Endothelial cell of umbilical vein (primary cell): ENCODE measurements at regions of chr7 and their contacts with region 1.

Region 1: DNA sequence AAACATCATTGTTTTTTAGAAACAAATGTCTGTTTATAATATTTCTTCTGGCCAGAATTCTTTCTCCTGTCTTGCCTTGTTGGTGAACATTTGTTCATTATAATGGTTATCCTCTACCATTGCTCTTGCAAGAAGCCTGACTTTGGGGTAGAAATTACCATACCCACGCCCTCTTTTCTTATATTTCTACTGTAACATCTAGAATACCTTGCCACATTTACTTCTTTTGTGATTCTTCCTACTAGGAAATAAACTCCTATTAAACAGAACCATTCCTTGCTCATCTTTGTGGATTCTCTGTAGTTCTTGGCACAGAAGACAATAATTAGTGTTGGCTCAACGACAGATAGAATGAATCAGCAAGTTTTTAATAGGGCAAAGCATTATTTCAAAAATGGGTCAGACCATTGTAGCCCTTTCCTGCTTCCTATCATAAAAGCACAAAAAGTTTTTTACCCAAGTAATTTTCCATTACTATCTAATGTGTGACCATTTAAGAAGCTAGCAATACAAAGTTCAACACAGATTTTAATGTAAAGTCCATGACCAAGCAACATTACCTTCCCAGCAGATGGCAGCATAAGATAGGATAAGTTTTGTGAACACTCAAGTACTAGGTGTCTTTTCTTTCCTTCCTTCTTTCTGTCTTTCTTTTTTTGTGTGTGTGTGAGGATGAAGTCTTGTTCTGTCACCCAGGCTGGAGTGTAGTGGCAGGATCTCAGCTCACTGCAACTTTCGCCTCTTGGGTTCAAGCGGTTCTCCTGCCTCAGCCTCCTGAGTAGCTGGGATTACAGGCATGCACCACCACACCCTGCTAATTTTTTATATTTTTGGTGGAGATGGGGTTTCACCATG is 270.4 kb downstream of the HGF start:
- DNase-seq: peak; percentile 91
- H3K4me3 ChIP-seq: no peak overlapping the region
- H3K27ac ChIP-seq: no peak overlapping the region
- H3K4me1 ChIP-seq: peaks cover 14% of the 10 kb centered on the region
- H3K27me3 ChIP-seq: no peaks in the 10 kb centered on the region
- CTCF ChIP-seq: peak; percentile 36
- POLR2A ChIP-seq: no peak

Region 2: GRCh38 chr7:81515009-81515408 is 15.5 kb after region 1 on chr7:
- CTCF ChIA-PET with region 1: interaction called, 24 read pairs
- POLR2A ChIA-PET with region 1: no interaction called
- dilution Hi-C with region 1: no loop called
- intact Hi-C with region 1: no loop called
- DNase-seq: no peak
- H3K4me3 ChIP-seq: no peak overlapping the region
- H3K27ac ChIP-seq: no peak overlapping the region
- H3K4me1 ChIP-seq: peaks cover 12% of the 10 kb centered on the region
- H3K27me3 ChIP-seq: no peaks in the 10 kb centered on the region
- CTCF ChIP-seq: no peak
- POLR2A ChIP-seq: no peak

Region 3: DNA sequence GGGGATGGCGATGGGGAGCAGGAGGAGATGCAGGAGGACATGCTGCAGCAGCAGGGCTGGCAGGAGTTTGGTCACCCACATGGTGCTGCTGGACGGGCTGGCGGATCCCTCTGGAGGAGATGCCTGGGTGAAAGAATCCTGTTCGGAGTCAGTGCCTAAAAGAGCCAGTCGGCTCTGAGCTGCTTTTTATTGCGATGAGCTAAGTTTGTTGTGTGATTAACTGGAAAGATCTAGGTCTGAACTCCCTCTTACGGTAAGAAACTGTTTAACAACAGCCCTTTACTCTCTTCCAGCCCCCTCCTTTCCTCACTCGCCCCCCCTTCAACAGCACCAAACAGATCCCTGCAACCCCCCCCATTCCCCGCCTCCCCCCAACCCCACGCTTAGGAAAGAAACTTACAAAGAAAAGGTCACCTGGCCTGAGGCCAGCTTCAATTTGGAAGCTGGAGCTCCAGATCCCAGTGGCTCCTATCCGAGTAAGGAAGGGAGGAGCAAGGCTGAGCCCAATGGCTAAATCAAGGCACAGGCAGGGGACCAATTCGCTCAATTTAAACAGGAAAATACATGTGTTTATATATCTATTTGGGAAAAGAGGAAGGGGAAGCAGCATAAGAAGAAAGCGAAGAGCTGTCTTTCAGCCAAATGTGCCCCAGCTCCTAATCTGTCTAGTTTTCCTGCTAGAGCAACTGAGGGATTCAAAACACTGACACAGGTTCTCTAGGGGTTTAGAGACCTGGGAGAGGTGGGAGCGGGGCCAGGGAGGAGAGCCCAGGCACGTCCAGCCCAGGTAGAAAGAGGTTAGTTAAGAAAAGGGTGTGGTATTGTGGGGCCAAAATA is 270.6 kb after region 1 on chr7 and contains the start of gene HGF:
- CTCF ChIA-PET with region 1: interaction called, 22 read pairs
- POLR2A ChIA-PET with region 1: no interaction called
- dilution Hi-C with region 1: loop called (anchors 25 kb)
- intact Hi-C with region 1: loop called (anchors 5 kb)
- DNase-seq: peak; percentile 38
- H3K4me3 ChIP-seq: peak within 1 kb of the TSS in 1 of 3 experiments; percentile 27
- H3K27ac ChIP-seq: no peak within 1 kb of the TSS
- H3K4me1 ChIP-seq: peaks cover 3% of the 10 kb centered on the region
- H3K27me3 ChIP-seq: no peaks in the 10 kb centered on the region
- CTCF ChIP-seq: peak in 1 of 2 donors; percentile 8
- POLR2A ChIP-seq: no peak
- total RNA-seq, gene HGF: 0.15 and 0.35 TPM in 2 replicates

Region 4: DNA sequence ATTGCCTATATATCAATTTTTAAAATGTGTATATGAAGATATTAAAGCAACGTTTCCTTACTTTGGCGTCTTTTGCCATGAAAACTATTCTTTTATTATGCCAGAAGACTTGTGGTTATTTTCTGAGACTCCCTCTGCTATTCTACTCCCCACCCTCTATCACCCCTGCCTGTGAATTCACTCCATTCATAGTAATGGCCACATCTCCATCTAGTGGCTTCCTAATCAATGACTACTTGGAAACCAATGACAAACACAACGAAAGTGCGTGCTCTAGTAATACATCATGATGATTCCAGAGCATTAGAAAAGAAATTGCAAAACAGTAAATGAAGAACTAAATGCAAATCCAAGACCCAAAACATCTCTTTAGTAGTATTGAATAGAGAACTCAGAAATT is 457.0 kb after region 1 on chr7:
- CTCF ChIA-PET with region 1: interaction called, 69 read pairs
- POLR2A ChIA-PET with region 1: no interaction called
- dilution Hi-C with region 1: no loop called
- intact Hi-C with region 1: loop called (anchors 1 kb)
- DNase-seq: peak; percentile 52
- H3K4me3 ChIP-seq: no peak overlapping the region
- H3K27ac ChIP-seq: no peak overlapping the region
- H3K4me1 ChIP-seq: no peaks in the 10 kb centered on the region
- H3K27me3 ChIP-seq: no peaks in the 10 kb centered on the region
- CTCF ChIP-seq: peak; percentile 9 to 29
- POLR2A ChIP-seq: no peak

Region 5: DNA sequence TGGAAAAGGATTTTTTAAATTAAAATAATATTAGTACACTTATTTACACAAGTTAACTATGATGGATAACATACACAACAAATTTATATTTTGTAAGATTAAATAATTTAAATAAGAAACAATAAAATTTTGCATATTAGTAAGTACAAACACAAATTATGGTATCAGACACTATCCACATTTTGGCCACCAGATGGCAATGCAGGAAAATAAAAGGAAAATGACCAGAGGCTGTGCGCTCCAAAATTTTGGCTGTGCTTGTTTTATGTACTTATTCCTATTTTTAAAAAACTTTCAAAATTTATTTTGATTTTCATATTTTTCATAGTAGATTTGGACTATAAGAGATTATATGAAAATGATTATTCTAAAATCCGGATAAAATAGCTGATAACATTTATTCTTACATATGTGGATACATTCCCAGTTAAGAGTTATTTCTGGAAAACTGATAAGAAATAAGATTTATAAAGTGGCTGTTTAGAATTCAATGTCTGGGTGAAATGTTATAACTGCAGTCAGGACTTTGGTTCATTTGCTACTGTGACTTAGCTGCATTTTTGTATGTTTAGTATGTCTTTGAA is 545.1 kb after region 1 on chr7:
- CTCF ChIA-PET with region 1: interaction called, 12 read pairs
- POLR2A ChIA-PET with region 1: no interaction called
- dilution Hi-C with region 1: no loop called
- intact Hi-C with region 1: no loop called
- DNase-seq: peak; percentile 67
- H3K4me3 ChIP-seq: no peak overlapping the region
- H3K27ac ChIP-seq: no peak overlapping the region
- H3K4me1 ChIP-seq: peaks cover 27% of the 10 kb centered on the region
- H3K27me3 ChIP-seq: no peaks in the 10 kb centered on the region
- CTCF ChIP-seq: peak; percentile 36
- POLR2A ChIP-seq: no peak

Region 6: GRCh38 chr7:82572195-82572880 is 1072.8 kb after region 1 on chr7:
- CTCF ChIA-PET with region 1: interaction called, 23 read pairs
- POLR2A ChIA-PET with region 1: no interaction called
- dilution Hi-C with region 1: no loop called
- intact Hi-C with region 1: loop called (anchors 1 kb)
- DNase-seq: peak; percentile 80
- H3K4me3 ChIP-seq: peak overlapping the region in 1 of 3 experiments; percentile 37
- H3K27ac ChIP-seq: no peak overlapping the region
- H3K4me1 ChIP-seq: peaks cover 4% of the 10 kb centered on the region
- H3K27me3 ChIP-seq: no peaks in the 10 kb centered on the region
- CTCF ChIP-seq: peak; percentile 76 to 87
- POLR2A ChIP-seq: no peak

Region 7: DNA sequence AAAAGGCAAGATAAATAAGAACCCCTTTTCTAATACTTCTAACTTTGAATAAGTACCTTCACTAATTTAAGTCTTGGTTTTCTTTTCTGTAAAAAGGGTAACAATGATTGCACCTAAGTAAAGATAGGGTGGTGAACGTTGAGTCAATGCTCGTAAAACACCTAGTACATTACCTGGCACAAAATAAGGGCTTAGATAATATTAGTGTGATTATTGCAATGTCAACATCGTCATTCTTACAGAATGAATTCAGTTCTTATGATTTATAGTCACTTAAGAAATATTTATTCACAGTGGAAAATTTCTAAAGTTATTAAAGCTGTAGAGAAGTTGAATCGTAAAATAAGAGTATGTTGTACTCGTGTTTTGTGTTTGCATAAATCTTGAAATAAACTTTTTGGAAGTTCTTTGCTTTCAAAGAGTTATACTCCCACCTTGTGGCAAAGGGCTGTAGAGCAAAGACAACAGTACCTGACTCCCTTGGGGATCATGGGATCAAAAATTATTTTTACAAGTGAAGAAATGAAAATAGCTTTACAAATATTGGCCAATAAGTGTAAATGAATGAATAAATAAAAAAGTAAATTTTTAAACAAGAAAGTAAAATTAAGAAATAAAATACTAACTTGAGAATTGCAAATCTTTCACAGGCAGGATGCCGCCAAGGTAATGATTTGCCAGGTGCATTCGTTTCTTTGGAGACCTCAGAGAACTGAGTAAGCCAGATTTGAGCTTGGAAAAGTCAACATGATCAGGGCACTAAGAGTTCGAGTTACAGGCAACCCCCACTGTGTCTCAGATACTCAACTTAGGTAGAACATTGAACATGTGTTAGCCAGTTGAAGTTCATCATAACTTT is 1229.9 kb after region 1 on chr7:
- CTCF ChIA-PET with region 1: interaction called, 15 read pairs
- POLR2A ChIA-PET with region 1: no interaction called
- dilution Hi-C with region 1: no loop called
- intact Hi-C with region 1: loop called (anchors 1 kb)
- DNase-seq: peak; percentile 60
- H3K4me3 ChIP-seq: no peak overlapping the region
- H3K27ac ChIP-seq: no peak overlapping the region
- H3K4me1 ChIP-seq: no peaks in the 10 kb centered on the region
- H3K27me3 ChIP-seq: no peaks in the 10 kb centered on the region
- CTCF ChIP-seq: peak; percentile 48 to 62
- POLR2A ChIP-seq: no peak